ENCODE measurements at regions of chr15 and their contacts with region 1.

Region 1: GRCh38 chr15:90956594-90957030 is 1.9 kb downstream of the RCCD1 start:
- DNase-seq: peak; percentile 72 to 82
- H3K4me3 ChIP-seq: peak overlapping the region; percentile 58 to 59
- H3K27ac ChIP-seq: peak overlapping the region; percentile 57 to 73
- H3K4me1 ChIP-seq: peaks cover 0 to 5% of the 10 kb centered on the region in 2 donors
- H3K27me3 ChIP-seq: no peaks in the 10 kb centered on the region
- CTCF ChIP-seq: peak; percentile 82 to 98 (median 88)
- POLR2A ChIP-seq: no peak

Region 2: DNA sequence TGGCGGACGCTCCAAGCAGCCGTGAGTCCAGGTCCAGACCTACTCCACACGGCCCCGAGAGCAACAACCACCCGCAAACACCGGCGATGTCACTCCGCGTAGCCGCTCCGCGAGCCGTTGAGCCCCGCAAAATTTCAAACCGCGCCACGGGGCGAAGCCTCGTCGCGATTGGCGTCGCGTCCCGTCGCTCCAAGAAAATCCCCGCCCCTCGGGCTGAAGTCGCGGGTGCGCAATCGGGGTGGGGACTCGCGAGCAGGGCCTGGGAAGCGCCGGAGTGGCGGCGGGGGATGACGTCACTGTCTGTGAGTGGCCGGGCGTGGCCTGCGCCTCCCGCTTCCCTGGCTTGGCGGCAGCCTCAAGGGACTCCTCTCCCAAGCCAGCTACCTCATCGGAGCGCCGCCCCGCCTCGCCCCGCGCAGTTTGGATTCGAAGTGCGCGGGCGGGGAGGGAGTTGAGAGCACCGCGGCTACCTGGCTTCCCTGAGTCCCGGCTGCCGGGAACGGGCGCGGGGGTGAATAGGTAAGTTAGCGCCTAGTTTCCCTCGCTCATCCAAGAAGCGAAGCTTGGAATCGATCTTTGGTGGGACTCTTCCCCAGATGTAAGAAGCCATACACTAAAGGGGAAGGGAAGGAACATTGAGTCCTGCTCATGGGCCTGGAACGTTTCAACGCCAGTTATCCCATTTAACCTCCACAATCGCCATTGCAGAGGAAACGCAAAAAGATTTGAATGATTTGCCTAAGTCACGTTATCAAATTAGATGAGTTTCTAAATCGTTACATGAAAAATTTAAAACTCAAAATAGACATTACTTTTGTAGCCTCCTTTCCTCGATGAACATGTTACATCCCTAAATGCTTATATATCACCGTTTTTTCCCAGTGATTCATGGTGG is 38.1 kb after region 1 on chr15 and contains the start of gene PRC1:
- intact Hi-C with region 1: loop called (anchors 2 kb)
- DNase-seq: peak; percentile 98
- H3K4me3 ChIP-seq: peak within 1 kb of the TSS; percentile 76 to 92
- H3K27ac ChIP-seq: peak within 1 kb of the TSS; percentile 91 to 94
- H3K4me1 ChIP-seq: no peaks in the 10 kb centered on the region
- H3K27me3 ChIP-seq: no peaks in the 10 kb centered on the region
- CTCF ChIP-seq: peak in 1 of 4 experiments; percentile 4
- POLR2A ChIP-seq: peak; percentile 82 to 83
- total RNA-seq, gene PRC1: 7.1 to 95.0 (median 9.4) TPM in 3 of 4 donors, not detected in the other

Measured in uterus (tissue), 4 donors.